ENCODE measurements at regions of chrX and their contacts with region 1.

Region 1: GRCh38 chrX:72269671-72270251 is 7.3 kb downstream of the RPS4X start:
- DNase-seq: peak; percentile 61
- ATAC-seq: peak; percentile 76
- H3K4me3 Mint-ChIP-seq: no peak overlapping the region
- H3K27ac Mint-ChIP-seq: peak overlapping the region; percentile 88
- H3K4me1 Mint-ChIP-seq: peaks cover 46% of the 10 kb centered on the region
- H3K27me3 Mint-ChIP-seq: no peaks in the 10 kb centered on the region

Region 2: GRCh38 chrX:71532753-71533425 is 736.9 kb before region 1 on chrX and contains the start of gene OGT:
- CTCF ChIA-PET with region 1: no interaction called
- POLR2A ChIA-PET with region 1: no interaction called
- intact Hi-C with region 1: loop called in 1 of 2 experiments (anchors 10 kb)
- DNase-seq: peak; percentile 96
- ATAC-seq: peak; percentile 76
- H3K4me3 Mint-ChIP-seq: peak within 1 kb of the TSS; percentile 96
- H3K27ac Mint-ChIP-seq: peak within 1 kb of the TSS; percentile 98
- H3K4me1 Mint-ChIP-seq: peaks cover 26% of the 10 kb centered on the region
- H3K27me3 Mint-ChIP-seq: no peaks in the 10 kb centered on the region
- total RNA-seq, gene OGT: 331 to 339 TPM

Region 3: GRCh38 chrX:72018277-72019112 is 251.3 kb before region 1 on chrX:
- CTCF ChIA-PET with region 1: no interaction called
- POLR2A ChIA-PET with region 1: no interaction called
- intact Hi-C with region 1: loop called in 1 of 2 experiments (anchors 10 kb)
- DNase-seq: peak; percentile 89
- ATAC-seq: peak; percentile 93
- H3K4me3 Mint-ChIP-seq: no peak overlapping the region
- H3K27ac Mint-ChIP-seq: no peak overlapping the region
- H3K4me1 Mint-ChIP-seq: peaks cover 29% of the 10 kb centered on the region
- H3K27me3 Mint-ChIP-seq: peaks cover 7% of the 10 kb centered on the region

Region 4: GRCh38 chrX:72121383-72121782 is 148.4 kb before region 1 on chrX:
- CTCF ChIA-PET with region 1: no interaction called
- POLR2A ChIA-PET with region 1: no interaction called
- intact Hi-C with region 1: no loop called
- DNase-seq: peak; percentile 58
- ATAC-seq: peak; percentile 86
- H3K4me3 Mint-ChIP-seq: no peak overlapping the region
- H3K27ac Mint-ChIP-seq: no peak overlapping the region
- H3K4me1 Mint-ChIP-seq: peaks cover 19% of the 10 kb centered on the region
- H3K27me3 Mint-ChIP-seq: peaks cover 3% of the 10 kb centered on the region

Region 5: DNA sequence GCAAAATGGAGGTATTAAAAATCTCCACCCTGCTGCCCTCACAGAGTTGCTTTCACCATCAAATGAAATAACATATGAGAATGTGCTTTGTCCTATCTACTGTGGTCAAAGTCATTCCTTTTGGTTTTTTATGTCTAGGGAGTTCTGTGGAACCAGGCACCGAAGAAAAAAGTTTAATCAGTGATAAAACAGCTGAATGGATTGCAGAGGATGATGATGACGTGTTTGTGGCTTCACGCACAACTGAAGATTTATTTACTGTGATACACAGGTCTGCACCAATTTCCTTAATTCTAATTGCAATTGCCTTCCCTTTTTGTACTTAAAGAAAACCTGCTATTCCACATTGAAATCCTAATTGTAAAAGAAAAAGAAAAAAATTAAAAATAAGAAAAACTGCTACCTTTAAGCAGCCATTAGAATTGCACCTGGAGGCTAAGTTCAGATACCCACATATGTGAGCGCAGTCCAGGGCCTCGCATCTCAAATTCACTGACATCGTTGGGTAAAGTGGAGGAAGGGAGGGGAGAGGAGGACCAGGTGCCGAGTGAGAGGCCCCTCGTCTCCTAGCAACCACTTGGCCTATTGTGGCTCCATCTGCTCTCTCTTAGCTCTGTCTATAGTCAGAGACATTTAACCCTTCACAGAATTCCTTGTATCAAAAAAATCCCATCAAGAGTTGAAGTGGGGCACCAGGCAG is 127.5 kb before region 1 on chrX:
- CTCF ChIA-PET with region 1: no interaction called
- POLR2A ChIA-PET with region 1: no interaction called
- intact Hi-C with region 1: loop called in 1 of 2 experiments (anchors 5 kb)
- DNase-seq: no peak
- ATAC-seq: no peak
- H3K4me3 Mint-ChIP-seq: no peak overlapping the region
- H3K27ac Mint-ChIP-seq: no peak overlapping the region
- H3K4me1 Mint-ChIP-seq: peaks cover 26% of the 10 kb centered on the region
- H3K27me3 Mint-ChIP-seq: peaks cover 6% of the 10 kb centered on the region

Region 6: GRCh38 chrX:72358313-72358712 is 88.6 kb after region 1 on chrX:
- CTCF ChIA-PET with region 1: no interaction called
- POLR2A ChIA-PET with region 1: no interaction called
- intact Hi-C with region 1: no loop called
- DNase-seq: no peak
- ATAC-seq: no peak
- H3K4me3 Mint-ChIP-seq: no peak overlapping the region
- H3K27ac Mint-ChIP-seq: no peak overlapping the region
- H3K4me1 Mint-ChIP-seq: no peaks in the 10 kb centered on the region
- H3K27me3 Mint-ChIP-seq: no peaks in the 10 kb centered on the region

Region 7: DNA sequence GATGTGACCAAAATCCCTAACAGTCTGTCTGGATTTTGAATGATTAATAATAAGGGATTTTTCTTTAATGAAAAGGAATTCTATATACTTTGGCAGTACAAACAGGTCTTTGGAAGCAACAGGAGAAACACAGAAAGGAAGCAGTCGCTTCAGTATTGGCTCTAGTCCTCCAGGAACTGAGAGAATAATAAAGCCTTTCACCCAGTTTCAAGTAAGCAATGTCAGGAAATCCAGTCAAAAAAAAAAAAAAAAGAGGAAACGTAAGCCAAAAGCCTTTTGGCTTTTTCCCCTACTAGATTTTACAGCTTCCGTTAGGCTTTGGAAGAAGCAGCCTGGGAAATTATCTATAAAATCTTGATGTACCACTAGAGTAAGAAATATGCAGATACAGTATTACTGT is 364.6 kb after region 1 on chrX:
- CTCF ChIA-PET with region 1: no interaction called
- POLR2A ChIA-PET with region 1: no interaction called
- intact Hi-C with region 1: no loop called
- DNase-seq: no peak
- ATAC-seq: no peak
- H3K4me3 Mint-ChIP-seq: no peak overlapping the region
- H3K27ac Mint-ChIP-seq: no peak overlapping the region
- H3K4me1 Mint-ChIP-seq: no peaks in the 10 kb centered on the region
- H3K27me3 Mint-ChIP-seq: no peaks in the 10 kb centered on the region

Region 8: DNA sequence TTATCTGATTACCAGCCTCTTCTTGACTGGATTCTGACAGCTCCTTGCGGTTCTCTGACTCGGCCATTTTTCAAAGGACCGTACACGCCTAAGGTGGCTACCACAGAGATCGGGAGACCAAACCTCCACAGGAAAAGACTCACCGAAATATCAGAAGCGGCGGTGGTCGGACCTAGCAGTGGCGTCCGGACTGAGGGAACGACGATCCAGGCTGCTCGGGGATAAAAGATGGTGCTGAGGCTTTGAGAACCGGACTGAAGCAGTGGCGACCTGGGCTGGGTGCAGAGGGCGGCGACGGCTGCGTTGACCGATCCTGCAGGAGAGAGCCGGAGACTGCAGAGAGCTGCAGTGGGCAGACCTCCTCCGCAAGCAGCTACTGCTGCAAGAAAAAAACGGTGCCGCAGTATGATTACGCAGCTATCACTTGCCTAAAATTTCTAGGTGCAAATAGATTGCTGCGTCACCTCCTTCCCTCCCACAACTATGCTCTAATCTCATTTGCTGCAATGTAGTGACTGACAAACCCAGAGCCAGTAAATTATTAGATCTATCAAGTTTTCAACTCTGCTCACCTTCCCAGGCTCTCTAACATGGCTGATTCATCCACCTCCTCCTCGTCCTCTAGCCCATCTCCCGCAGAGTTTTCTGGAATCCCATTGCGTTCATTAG is 944.8 kb after region 1 on chrX and contains the start of gene NAP1L2:
- CTCF ChIA-PET with region 1: no interaction called
- POLR2A ChIA-PET with region 1: no interaction called
- intact Hi-C with region 1: loop called in 1 of 2 experiments (anchors 10 kb)
- DNase-seq: peak; percentile 62
- ATAC-seq: peak; percentile 91
- H3K4me3 Mint-ChIP-seq: peak within 1 kb of the TSS; percentile 92
- H3K27ac Mint-ChIP-seq: peak within 1 kb of the TSS; percentile 89
- H3K4me1 Mint-ChIP-seq: peaks cover 17% of the 10 kb centered on the region
- H3K27me3 Mint-ChIP-seq: peaks cover 2% of the 10 kb centered on the region
- total RNA-seq, gene NAP1L2: 1.9 to 2.9 TPM

Measured in activated CD4-positive, alpha-beta T cell treated with anti-CD3 and anti-CD28 coated beads for 36 hours (primary cell).